Mammary epithelial cell (primary cell): ENCODE measurements at regions of chr5 and their contacts with region 1.

Region 1: GRCh38 chr5:95068289-95068910 is 216.5 kb downstream of the MCTP1 start:
- DNase-seq: no peak
- H3K4me3 ChIP-seq: no peak overlapping the region
- H3K27ac ChIP-seq: no peak overlapping the region
- H3K4me1 ChIP-seq: no peaks in the 10 kb centered on the region
- H3K27me3 ChIP-seq: no peaks in the 10 kb centered on the region
- CTCF ChIP-seq: no peak

Region 2: GRCh38 chr5:95057615-95058014 is 10.8 kb before region 1 on chr5:
- CTCF ChIA-PET with region 1: interaction called, 14 read pairs
- dilution Hi-C with region 1: no loop called
- in situ Hi-C with region 1: no loop called
- intact Hi-C with region 1: no loop called
- DNase-seq: no peak
- H3K4me3 ChIP-seq: no peak overlapping the region
- H3K27ac ChIP-seq: no peak overlapping the region
- H3K4me1 ChIP-seq: no peaks in the 10 kb centered on the region
- H3K27me3 ChIP-seq: no peaks in the 10 kb centered on the region
- CTCF ChIP-seq: no peak